CD8-positive, alpha-beta T cell (primary cell): ENCODE measurements at regions of chr5 and their contacts with region 1.

Region 1: DNA sequence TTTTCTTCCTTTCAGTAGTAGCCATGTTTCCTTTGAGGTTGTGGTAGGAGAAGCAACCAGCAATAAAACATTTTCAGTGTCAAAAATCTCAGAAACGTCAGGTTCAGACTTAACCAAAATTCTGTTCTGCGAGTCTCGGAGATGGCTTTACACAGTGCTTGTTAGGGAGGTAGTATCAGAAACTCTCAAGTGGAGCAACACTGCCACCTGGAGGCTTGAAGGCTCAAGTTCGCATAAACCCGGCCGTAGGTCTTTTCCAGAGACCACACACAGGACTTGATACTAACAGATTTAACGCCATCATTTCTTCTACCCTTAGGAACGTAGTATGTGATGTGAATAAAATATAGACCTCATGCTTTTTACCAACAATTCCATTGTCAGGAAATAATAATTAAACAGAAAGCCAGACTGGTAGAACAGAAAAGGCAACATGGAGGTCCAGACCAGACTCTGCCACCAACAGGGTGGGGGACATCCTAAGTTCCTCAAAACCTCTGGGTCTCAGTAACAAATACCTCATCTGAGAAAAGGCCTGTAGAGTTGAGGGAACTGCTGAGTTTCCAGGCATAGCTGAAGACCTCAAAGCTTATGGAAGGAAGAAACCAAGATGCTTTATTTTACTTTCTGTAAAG is 8.5 kb downstream of the PTGER4 start:
- DNase-seq: peak; percentile 72 to 93 (median 88)
- ATAC-seq: peak; percentile 69
- H3K4me3 ChIP-seq: peak overlapping the region in 1 of 2 experiments; percentile 77
- H3K4me3 Mint-ChIP-seq: peak overlapping the region; percentile 94
- H3K27ac ChIP-seq: peak overlapping the region; percentile 1 to 70
- H3K27ac Mint-ChIP-seq: peak overlapping the region; percentile 91
- H3K4me1 ChIP-seq: peaks cover 54% of the 10 kb centered on the region
- H3K4me1 Mint-ChIP-seq: peaks cover 83% of the 10 kb centered on the region
- H3K27me3 ChIP-seq: no peaks in the 10 kb centered on the region
- H3K27me3 Mint-ChIP-seq: no peaks in the 10 kb centered on the region
- CTCF ChIP-seq: peak; percentile 73

Region 2: GRCh38 chr5:39074016-39074886 is 1614.0 kb before region 1 on chr5 and contains the start of gene RICTOR:
- CTCF ChIA-PET with region 1: no interaction called
- POLR2A ChIA-PET with region 1: no interaction called
- intact Hi-C with region 1: loop called in 1 of 2 experiments (anchors 10 kb)
- DNase-seq: peak; percentile 85 to 94 (median 91)
- ATAC-seq: peak; percentile 71
- H3K4me3 ChIP-seq: peak within 1 kb of the TSS; percentile 81 to 95
- H3K4me3 Mint-ChIP-seq: peak within 1 kb of the TSS; percentile 97
- H3K27ac ChIP-seq: peak within 1 kb of the TSS; percentile 92 to 94
- H3K27ac Mint-ChIP-seq: peak within 1 kb of the TSS; percentile 96
- H3K4me1 ChIP-seq: peaks cover 36% of the 10 kb centered on the region
- H3K4me1 Mint-ChIP-seq: peaks cover 46% of the 10 kb centered on the region
- H3K27me3 ChIP-seq: peaks cover 10 to 11% of the 10 kb centered on the region in 2 experiments
- H3K27me3 Mint-ChIP-seq: peaks cover 25% of the 10 kb centered on the region
- CTCF ChIP-seq: no peak
- total RNA-seq, gene RICTOR: 116 to 128 TPM

Region 3: GRCh38 chr5:39578887-39579497 is 1109.3 kb before region 1 on chr5:
- CTCF ChIA-PET with region 1: interaction called, 8 read pairs
- POLR2A ChIA-PET with region 1: no interaction called
- intact Hi-C with region 1: loop called in 1 of 2 experiments (anchors 2 kb)
- DNase-seq: peak in 2 of 9 experiments; percentile 36 to 52
- ATAC-seq: no peak
- H3K4me3 ChIP-seq: no peak overlapping the region
- H3K4me3 Mint-ChIP-seq: no peak overlapping the region
- H3K27ac ChIP-seq: no peak overlapping the region
- H3K27ac Mint-ChIP-seq: no peak overlapping the region
- H3K4me1 ChIP-seq: peaks cover 4% of the 10 kb centered on the region
- H3K4me1 Mint-ChIP-seq: peaks cover 6% of the 10 kb centered on the region
- H3K27me3 ChIP-seq: no peaks in the 10 kb centered on the region
- H3K27me3 Mint-ChIP-seq: peaks cover 5% of the 10 kb centered on the region
- CTCF ChIP-seq: peak; percentile 98

Region 4: DNA sequence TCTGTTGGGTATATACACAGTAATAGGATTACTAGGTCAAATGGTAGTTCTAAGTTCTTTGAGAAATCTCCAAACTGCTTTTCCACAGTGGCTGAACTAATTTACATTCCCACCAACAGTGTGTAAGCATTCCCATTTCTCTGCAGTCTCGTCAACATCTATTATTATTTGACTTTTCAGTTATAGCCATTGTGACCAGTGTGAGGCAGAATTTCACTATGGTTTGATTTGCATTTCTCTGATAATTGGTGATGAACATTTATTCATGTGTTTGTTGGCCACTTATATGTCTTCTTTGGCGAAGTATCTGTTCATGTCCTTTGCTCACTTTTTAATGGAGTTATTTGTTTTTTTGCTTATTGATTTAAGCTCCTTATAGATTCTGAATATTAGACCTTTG is 667.2 kb before region 1 on chr5:
- CTCF ChIA-PET with region 1: no interaction called
- POLR2A ChIA-PET with region 1: no interaction called
- intact Hi-C with region 1: loop called (anchors 2 to 5 kb)
- DNase-seq: peak in 2 of 9 experiments; percentile 15 to 28
- ATAC-seq: no peak
- H3K4me3 ChIP-seq: no peak overlapping the region
- H3K4me3 Mint-ChIP-seq: no peak overlapping the region
- H3K27ac ChIP-seq: no peak overlapping the region
- H3K27ac Mint-ChIP-seq: no peak overlapping the region
- H3K4me1 ChIP-seq: no peaks in the 10 kb centered on the region
- H3K4me1 Mint-ChIP-seq: no peaks in the 10 kb centered on the region
- H3K27me3 ChIP-seq: no peaks in the 10 kb centered on the region
- H3K27me3 Mint-ChIP-seq: peaks cover 6% of the 10 kb centered on the region
- CTCF ChIP-seq: no peak

Region 5: DNA sequence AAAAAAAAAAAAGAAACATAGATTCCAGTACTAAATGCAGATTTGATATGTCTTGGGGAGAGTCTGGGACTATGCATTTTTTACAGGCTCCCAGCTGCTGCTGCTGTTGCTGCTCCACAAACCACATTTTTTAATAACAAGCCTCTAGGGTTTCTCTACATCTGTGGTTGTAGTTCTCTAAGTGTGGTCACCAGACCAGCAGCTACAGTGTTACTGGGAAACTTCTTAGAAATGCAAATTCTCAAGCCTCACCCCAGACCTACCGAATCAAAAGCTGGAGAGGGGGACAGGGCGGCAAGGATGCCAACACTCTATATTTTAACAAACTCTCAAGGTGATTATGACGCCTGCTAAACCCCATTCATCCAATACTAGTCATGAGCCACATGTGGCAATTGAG is 302.0 kb before region 1 on chr5:
- CTCF ChIA-PET with region 1: interaction called, 4 read pairs
- POLR2A ChIA-PET with region 1: no interaction called
- intact Hi-C with region 1: loop called in 1 of 2 experiments (anchors 5 kb)
- DNase-seq: peak in 5 of 9 experiments; percentile 14 to 81 (median 38)
- ATAC-seq: peak; percentile 57
- H3K4me3 ChIP-seq: no peak overlapping the region
- H3K4me3 Mint-ChIP-seq: no peak overlapping the region
- H3K27ac ChIP-seq: peak overlapping the region in 1 of 2 experiments; percentile 42
- H3K27ac Mint-ChIP-seq: peak overlapping the region; percentile 45
- H3K4me1 ChIP-seq: peaks cover 50% of the 10 kb centered on the region
- H3K4me1 Mint-ChIP-seq: peaks cover 79% of the 10 kb centered on the region
- H3K27me3 ChIP-seq: no peaks in the 10 kb centered on the region
- H3K27me3 Mint-ChIP-seq: no peaks in the 10 kb centered on the region
- CTCF ChIP-seq: no peak

Region 6: GRCh38 chr5:40502736-40503135 is 185.5 kb before region 1 on chr5:
- CTCF ChIA-PET with region 1: interaction called, 3 read pairs
- POLR2A ChIA-PET with region 1: no interaction called
- intact Hi-C with region 1: loop called (anchors 1 to 2 kb)
- DNase-seq: no peak
- ATAC-seq: no peak
- H3K4me3 ChIP-seq: no peak overlapping the region
- H3K4me3 Mint-ChIP-seq: no peak overlapping the region
- H3K27ac ChIP-seq: no peak overlapping the region
- H3K27ac Mint-ChIP-seq: no peak overlapping the region
- H3K4me1 ChIP-seq: no peaks in the 10 kb centered on the region
- H3K4me1 Mint-ChIP-seq: peaks cover 9% of the 10 kb centered on the region
- H3K27me3 ChIP-seq: no peaks in the 10 kb centered on the region
- H3K27me3 Mint-ChIP-seq: no peaks in the 10 kb centered on the region
- CTCF ChIP-seq: no peak

Region 7: DNA sequence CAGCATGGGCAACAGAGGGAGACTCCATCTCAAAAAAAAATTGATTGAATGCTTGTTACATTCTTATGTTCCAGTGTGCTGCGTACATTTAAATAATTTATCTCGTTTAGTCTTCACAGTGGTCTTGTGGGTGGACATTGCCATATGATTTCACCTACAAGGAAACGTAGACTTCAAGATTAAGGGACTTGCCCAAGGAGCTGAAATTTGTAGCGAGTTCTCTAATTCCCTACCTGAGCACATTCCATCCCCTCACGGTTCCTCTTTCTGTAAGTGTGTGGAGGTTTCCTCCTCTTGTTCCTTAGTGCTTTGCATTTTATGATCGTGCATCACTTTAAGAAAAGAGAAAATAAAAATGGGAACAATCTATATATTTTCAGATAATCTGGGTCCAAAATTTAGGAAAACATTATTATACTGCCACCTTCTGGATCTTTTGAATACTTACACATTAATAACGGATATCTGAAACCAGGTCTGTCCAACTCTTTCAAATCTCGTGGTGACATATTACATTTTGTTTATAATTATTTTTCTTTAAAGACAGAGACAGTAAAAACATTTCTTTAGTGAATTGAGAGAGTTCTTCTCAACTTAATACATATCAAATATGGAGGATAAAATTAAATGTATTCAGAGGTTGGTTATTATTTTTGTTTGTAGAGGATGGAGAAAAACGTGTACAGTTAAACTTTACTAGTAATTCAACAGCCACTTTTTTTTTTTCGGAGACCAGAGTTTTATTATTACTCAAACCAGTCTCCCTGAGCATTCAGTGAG is 191.1 kb after region 1 on chr5:
- CTCF ChIA-PET with region 1: no interaction called
- POLR2A ChIA-PET with region 1: no interaction called
- intact Hi-C with region 1: loop called in 1 of 2 experiments (anchors 5 kb)
- DNase-seq: peak in 2 of 9 experiments; percentile 26 to 42
- ATAC-seq: no peak
- H3K4me3 ChIP-seq: no peak overlapping the region
- H3K4me3 Mint-ChIP-seq: no peak overlapping the region
- H3K27ac ChIP-seq: no peak overlapping the region
- H3K27ac Mint-ChIP-seq: no peak overlapping the region
- H3K4me1 ChIP-seq: no peaks in the 10 kb centered on the region
- H3K4me1 Mint-ChIP-seq: peaks cover 3% of the 10 kb centered on the region
- H3K27me3 ChIP-seq: peaks cover 0 to 5% of the 10 kb centered on the region in 2 experiments
- H3K27me3 Mint-ChIP-seq: peaks cover 9% of the 10 kb centered on the region
- CTCF ChIP-seq: peak; percentile 82

Region 8: DNA sequence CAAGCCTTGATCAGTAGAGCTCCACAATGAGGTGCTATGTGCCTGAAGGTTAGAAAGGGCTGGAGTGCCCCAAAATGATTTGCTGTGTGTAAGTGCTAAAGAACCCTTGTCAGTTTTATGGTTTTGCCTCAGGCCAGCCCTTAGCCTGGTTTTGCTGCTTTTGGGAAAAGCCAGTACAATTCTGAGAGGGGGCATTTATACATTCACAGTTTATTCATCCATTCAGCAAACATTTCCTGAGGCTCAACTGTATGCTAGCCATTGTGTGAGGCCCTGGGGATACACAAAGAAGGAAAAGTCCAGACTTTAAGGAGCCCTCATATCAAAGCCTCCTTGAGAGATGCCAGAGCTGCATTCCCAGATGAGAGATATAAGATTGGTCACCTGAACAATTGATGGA is 937.3 kb after region 1 on chr5:
- CTCF ChIA-PET with region 1: no interaction called
- POLR2A ChIA-PET with region 1: no interaction called
- intact Hi-C with region 1: no loop called
- DNase-seq: no peak
- ATAC-seq: no peak
- H3K4me3 ChIP-seq: no peak overlapping the region
- H3K4me3 Mint-ChIP-seq: no peak overlapping the region
- H3K27ac ChIP-seq: no peak overlapping the region
- H3K27ac Mint-ChIP-seq: no peak overlapping the region
- H3K4me1 ChIP-seq: no peaks in the 10 kb centered on the region
- H3K4me1 Mint-ChIP-seq: no peaks in the 10 kb centered on the region
- H3K27me3 ChIP-seq: no peaks in the 10 kb centered on the region
- H3K27me3 Mint-ChIP-seq: peaks cover 9% of the 10 kb centered on the region
- CTCF ChIP-seq: no peak